ENCODE measurements at regions of chr3 and their contacts with region 1.

Region 1: DNA sequence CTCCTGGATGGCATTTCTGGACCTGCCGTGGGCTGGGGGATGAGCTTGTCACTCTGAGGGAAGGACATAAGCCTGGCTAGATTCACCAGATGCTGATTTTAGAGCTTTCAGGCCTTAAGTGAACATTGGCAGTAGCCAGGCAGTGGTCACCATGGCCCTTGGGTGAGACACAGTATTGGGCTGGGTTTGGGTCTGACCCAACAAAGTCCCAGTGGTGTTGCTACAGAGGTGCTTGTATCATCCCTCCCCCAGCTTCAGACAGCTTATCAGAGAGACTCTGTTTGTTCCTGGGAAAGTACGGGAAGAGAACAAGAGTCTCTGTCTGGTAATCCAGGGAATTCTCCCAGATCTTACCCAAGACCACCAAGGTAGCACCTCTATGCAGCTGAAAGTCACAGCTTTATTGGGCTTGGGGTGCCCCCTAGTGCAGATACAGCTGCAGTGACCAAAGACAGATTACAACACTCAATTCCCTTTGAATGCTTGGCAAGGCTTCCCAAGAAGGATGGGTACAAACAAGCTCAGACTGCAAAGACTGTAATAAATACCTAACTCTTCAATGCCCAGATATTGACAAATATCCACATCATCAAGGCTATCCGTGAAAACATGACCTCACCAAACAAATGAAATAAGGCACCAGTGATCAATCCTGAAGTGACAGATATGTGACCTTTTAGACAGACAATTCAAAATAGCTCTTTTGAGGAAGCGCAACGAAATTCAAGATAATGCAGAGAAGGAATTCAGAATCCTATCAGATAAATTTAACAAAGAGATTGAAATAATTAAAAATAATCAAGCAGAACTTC is 9.9 kb upstream of the RUVBL1 start:
- DNase-seq: peak in 1 of 2 experiments; percentile 53
- ATAC-seq: peak; percentile 76 to 93; a peak in 5 of 6 replicates
- H3K4me3 ChIP-seq: no peak overlapping the region
- H3K27ac ChIP-seq: no peak overlapping the region
- H3K4me1 ChIP-seq: no peaks in the 10 kb centered on the region
- CTCF ChIP-seq: peak; percentile 76
- EP300 ChIP-seq: no peak
- POLR2A ChIP-seq: no peak
- RAD21 ChIP-seq: peak; percentile 81 to 84

Region 2: DNA sequence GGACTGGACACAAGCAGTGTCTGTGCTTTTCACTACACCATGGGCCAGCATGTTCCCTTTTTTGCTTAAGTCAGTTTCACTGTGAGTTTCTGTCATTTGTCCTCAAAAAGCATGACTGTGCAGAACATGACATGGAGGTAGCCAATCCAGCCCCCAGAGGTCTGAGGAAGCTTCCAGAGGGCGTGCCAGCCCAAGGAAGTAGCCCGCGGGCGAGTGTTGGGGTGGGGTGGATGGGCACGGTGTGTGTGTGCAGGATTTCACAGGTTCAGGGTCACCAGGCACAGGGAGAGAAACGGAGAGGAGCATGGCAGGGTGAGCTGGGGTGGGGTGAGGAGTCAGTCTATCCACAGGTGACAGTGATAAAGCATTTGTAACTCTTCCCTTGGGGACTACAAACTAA is 11.9 kb after region 1 on chr3:
- CTCF ChIA-PET with region 1: interaction called, 11 read pairs
- POLR2A ChIA-PET with region 1: no interaction called
- DNase-seq: no peak
- ATAC-seq: no peak
- H3K4me3 ChIP-seq: no peak overlapping the region
- H3K27ac ChIP-seq: no peak overlapping the region
- H3K4me1 ChIP-seq: no peaks in the 10 kb centered on the region
- CTCF ChIP-seq: no peak
- EP300 ChIP-seq: no peak
- POLR2A ChIP-seq: no peak
- RAD21 ChIP-seq: no peak